MCF 10A (cell line): ENCODE measurements at regions of chr17 and their contacts with region 1.

Region 1: DNA sequence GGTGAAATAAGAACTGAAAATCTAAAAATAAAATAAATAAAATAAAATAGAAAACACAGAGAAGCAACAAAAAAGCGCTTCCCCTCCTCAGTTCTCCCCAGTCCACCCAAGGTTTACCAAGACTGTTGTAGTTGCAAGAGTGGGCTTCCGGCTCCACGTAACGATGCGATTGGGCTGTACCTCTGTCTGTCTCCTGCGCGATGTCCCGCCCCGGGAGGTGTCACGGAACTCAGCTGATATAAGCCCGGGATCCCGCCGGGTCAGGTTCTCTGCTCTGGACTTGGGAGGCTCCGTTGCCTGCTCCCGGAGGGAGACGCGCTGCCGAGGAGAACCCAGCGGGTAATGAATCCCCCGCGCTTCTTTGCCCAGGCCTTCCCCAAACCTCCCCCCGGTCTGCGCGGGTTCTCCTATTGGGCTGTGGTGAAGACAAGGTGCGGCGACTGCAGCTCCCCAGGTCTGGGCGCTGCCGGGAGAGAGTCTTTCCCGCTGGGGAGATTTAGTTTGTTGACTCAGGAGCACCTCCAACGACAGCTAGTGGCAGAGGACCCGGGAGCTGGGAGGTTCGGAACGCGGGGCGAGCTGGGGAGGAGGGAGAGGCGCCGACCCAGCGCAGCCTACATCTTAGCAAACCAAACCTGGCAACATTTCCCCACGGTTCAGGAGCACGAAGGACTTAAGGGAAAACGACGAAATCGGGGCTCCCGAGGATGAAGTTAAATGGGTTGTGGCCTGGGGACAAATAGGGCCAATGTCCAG is at the start of gene SLFN5:
- DNase-seq: peak; percentile 93
- H3K4me3 Mint-ChIP-seq: peak within 1 kb of the TSS; percentile 98
- H3K27ac Mint-ChIP-seq: peak within 1 kb of the TSS; percentile 96
- H3K4me1 Mint-ChIP-seq: peaks cover 52% of the 10 kb centered on the region
- H3K27me3 Mint-ChIP-seq: no peaks in the 10 kb centered on the region
- CTCF ChIP-seq: no peak
- total RNA-seq, gene SLFN5: 133 and 205 TPM in 2 replicates

Region 2: DNA sequence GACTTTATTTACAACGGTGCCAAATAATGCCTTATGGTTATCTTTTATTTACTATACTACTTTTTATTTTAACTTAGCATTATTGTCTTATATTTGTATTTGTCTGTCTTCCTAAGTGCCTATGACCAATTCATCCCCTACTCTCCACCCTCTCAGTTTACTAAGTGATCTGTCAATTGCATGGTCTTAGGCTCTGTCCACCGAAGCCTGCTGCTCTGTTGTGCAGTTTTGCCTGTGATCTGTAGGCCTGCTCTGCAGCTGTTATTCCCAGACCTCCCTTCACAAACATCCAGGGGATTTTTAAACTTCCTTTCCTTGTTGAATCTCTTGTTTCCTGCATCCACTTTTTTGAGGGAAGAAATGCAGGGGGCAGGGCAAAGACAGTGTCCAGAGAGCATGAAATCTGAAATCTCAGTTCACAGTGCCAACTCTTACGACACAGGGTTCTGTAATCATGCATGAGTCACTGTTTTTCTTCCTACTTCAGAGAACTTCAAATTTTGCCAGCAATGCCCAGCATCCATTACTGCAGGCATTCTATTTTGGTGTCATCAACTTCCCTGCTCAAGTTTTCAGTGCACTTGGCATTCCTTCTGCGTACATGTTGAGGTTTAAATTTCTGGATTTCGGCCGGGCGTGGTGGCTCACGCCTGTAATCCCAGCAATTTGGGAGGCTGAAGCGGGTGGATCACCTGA is 11.3 kb after region 1 on chr17:
- CTCF ChIA-PET with region 1: interaction called, 5 read pairs
- POLR2A ChIA-PET with region 1: interaction called, 70 read pairs
- intact Hi-C with region 1: loop called (anchors 1 kb)
- DNase-seq: peak; percentile 98
- H3K4me3 Mint-ChIP-seq: peak overlapping the region; percentile 36
- H3K27ac Mint-ChIP-seq: peak overlapping the region; percentile 63
- H3K4me1 Mint-ChIP-seq: peaks cover 30% of the 10 kb centered on the region
- H3K27me3 Mint-ChIP-seq: peaks cover 7% of the 10 kb centered on the region
- CTCF ChIP-seq: no peak

Region 3: GRCh38 chr17:35432176-35433074 is 189.4 kb after region 1 on chr17 and contains the start of gene SLFN12:
- CTCF ChIA-PET with region 1: interaction called, 4 read pairs
- POLR2A ChIA-PET with region 1: interaction called, 35 read pairs
- intact Hi-C with region 1: loop called (anchors 1 kb)
- DNase-seq: peak; percentile 92
- H3K4me3 Mint-ChIP-seq: peak within 1 kb of the TSS; percentile 79
- H3K27ac Mint-ChIP-seq: peak within 1 kb of the TSS; percentile 85
- H3K4me1 Mint-ChIP-seq: peaks cover 21% of the 10 kb centered on the region
- H3K27me3 Mint-ChIP-seq: no peaks in the 10 kb centered on the region
- CTCF ChIP-seq: no peak
- total RNA-seq, gene SLFN12: 6.3 and 8.0 TPM in 2 replicates

Region 4: GRCh38 chr17:35578197-35578928 is 335.4 kb after region 1 on chr17 and contains the start of gene PEX12:
- CTCF ChIA-PET with region 1: no interaction called
- POLR2A ChIA-PET with region 1: interaction called, 17 read pairs
- intact Hi-C with region 1: no loop called
- DNase-seq: peak; percentile 94
- H3K4me3 Mint-ChIP-seq: peak within 1 kb of the TSS; percentile 89
- H3K27ac Mint-ChIP-seq: peak within 1 kb of the TSS; percentile 92
- H3K4me1 Mint-ChIP-seq: no peaks in the 10 kb centered on the region
- H3K27me3 Mint-ChIP-seq: no peaks in the 10 kb centered on the region
- CTCF ChIP-seq: no peak
- total RNA-seq, gene PEX12: 5.8 and 6.8 TPM in 2 replicates